Esophagus squamous epithelium (tissue), 5 donors: ENCODE measurements at regions of chr12 and their contacts with region 1.

Region 1: DNA sequence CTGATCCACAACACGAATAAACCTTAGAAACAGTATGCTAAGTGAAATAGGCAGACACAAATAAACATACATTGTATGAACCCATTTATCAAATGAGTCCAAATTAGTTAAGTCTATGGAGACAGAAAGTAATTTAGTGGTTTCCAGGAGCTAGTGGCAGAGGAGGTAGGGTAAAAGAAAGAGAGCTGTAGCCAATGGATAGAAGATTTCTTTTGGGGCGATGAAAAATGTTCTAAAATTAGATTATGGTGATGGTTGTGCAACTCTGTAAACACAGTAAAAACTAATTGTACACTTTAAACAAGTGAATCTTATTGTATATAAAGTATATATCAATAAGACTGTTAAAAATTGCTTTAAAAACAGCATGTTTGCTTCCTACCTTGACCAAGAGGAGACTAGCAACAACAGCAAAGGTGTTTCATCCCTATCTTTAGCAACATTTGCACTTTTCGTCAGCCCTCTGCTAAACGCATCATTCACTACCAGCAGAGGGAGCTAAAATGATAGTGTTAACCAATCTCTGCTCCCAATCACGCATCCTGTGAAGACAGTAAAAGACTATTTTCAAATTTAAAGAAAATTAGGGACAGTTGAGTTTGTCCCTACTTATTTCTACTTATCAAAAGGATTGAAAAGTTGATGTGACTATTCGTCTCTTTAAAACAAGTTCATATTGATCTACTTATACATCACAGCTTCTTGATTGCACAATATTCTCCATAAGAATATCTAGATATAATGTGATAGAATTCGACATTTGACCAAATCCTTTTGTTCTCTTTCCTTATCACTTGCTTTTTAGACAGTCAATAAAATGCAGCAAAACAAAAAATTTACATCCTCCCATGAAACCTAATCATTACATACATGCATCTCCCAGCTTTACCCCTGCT is 24.0 kb upstream of the LGR5 start:
- DNase-seq: no peak
- H3K4me3 ChIP-seq: no peak overlapping the region
- H3K27ac ChIP-seq: no peak overlapping the region
- H3K4me1 ChIP-seq: no peaks in the 10 kb centered on the region
- H3K27me3 ChIP-seq: peaks cover 0 to 5% (median 0%) of the 10 kb centered on the region in 4 donors
- CTCF ChIP-seq: peak; percentile 27 to 68 (median 63)
- POLR2A ChIP-seq: no peak

Region 2: DNA sequence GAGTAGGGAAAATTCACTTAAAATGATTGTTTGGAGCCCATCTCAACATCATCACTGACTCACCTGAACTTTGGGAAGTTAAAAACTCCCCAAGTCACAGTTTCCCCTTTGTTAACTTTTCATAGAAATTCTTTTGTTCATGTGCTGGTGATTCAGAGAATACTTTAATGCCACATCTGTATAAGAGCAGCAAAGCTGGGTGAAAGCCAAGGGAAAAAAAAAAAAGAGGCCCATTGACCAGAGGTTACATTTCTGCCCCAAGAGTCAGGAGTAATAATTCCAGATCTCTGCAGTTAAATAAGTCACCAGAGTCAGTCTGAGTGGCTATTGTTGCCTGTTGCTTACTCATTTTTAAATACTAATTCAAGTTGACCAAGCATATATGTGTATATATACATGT is 112.4 kb before region 1 on chr12:
- intact Hi-C with region 1: no loop called
- DNase-seq: no peak
- H3K4me3 ChIP-seq: no peak overlapping the region
- H3K27ac ChIP-seq: no peak overlapping the region
- H3K4me1 ChIP-seq: peaks cover 0 to 6% (median 0%) of the 10 kb centered on the region in 3 donors
- H3K27me3 ChIP-seq: no peaks in the 10 kb centered on the region
- CTCF ChIP-seq: no peak
- POLR2A ChIP-seq: no peak

Region 3: GRCh38 chr12:71556881-71557280 is 141.3 kb after region 1 on chr12:
- intact Hi-C with region 1: no loop called
- DNase-seq: no peak
- H3K4me3 ChIP-seq: no peak overlapping the region
- H3K27ac ChIP-seq: no peak overlapping the region
- H3K4me1 ChIP-seq: no peaks in the 10 kb centered on the region
- H3K27me3 ChIP-seq: peaks cover 0 to 12% (median 0%) of the 10 kb centered on the region in 4 donors
- CTCF ChIP-seq: no peak
- POLR2A ChIP-seq: no peak

Region 4: GRCh38 chr12:71746983-71747611 is 331.5 kb after region 1 on chr12:
- intact Hi-C with region 1: loop called (anchors 10 kb)
- DNase-seq: no peak
- H3K4me3 ChIP-seq: no peak overlapping the region
- H3K27ac ChIP-seq: no peak overlapping the region
- H3K4me1 ChIP-seq: peaks cover 0 to 7% (median 0%) of the 10 kb centered on the region in 3 donors
- H3K27me3 ChIP-seq: no peaks in the 10 kb centered on the region
- CTCF ChIP-seq: peak; percentile 58 to 91 (median 72)
- POLR2A ChIP-seq: no peak